GM12878 (cell line): ENCODE measurements at regions of chr7 and their contacts with region 1.

Region 1: GRCh38 chr7:100369105-100369504 is 4.2 kb upstream of the PILRA start:
- DNase-seq: peak; percentile 90
- ATAC-seq: peak; percentile 74
- H3K4me3 ChIP-seq: no peak overlapping the region
- H3K27ac ChIP-seq: peak overlapping the region; percentile 93
- H3K4me1 ChIP-seq: peaks cover 70% of the 10 kb centered on the region
- H3K27me3 ChIP-seq: no peaks in the 10 kb centered on the region
- CTCF ChIP-seq: no peak
- EP300 ChIP-seq: peak; percentile 81 to 87
- POLR2A ChIP-seq: peak; percentile 77
- RAD21 ChIP-seq: no peak

Region 2: GRCh38 chr7:100342765-100343164 is 26.3 kb before region 1 on chr7:
- CTCF ChIA-PET with region 1: interaction called, 13 read pairs
- POLR2A ChIA-PET with region 1: interaction called, 6 read pairs
- RAD21 ChIA-PET with region 1: no interaction called
- SMC1A ChIA-PET with region 1: interaction called, 7 read pairs
- in situ Hi-C with region 1: no loop called
- intact Hi-C with region 1: no loop called
- DNase-seq: no peak
- ATAC-seq: no peak
- H3K4me3 ChIP-seq: no peak overlapping the region
- H3K27ac ChIP-seq: no peak overlapping the region
- H3K4me1 ChIP-seq: peaks cover 15% of the 10 kb centered on the region
- H3K27me3 ChIP-seq: no peaks in the 10 kb centered on the region
- CTCF ChIP-seq: no peak
- EP300 ChIP-seq: no peak
- POLR2A ChIP-seq: no peak
- RAD21 ChIP-seq: no peak

Region 3: GRCh38 chr7:100390286-100391009 is 21.3 kb after region 1 on chr7:
- CTCF ChIA-PET with region 1: interaction called, 8 read pairs
- POLR2A ChIA-PET with region 1: interaction called, 30 read pairs
- RAD21 ChIA-PET with region 1: interaction called, 27 read pairs
- SMC1A ChIA-PET with region 1: interaction called, 27 read pairs
- in situ Hi-C with region 1: no loop called
- intact Hi-C with region 1: no loop called
- DNase-seq: no peak
- ATAC-seq: no peak
- H3K4me3 ChIP-seq: no peak overlapping the region
- H3K27ac ChIP-seq: no peak overlapping the region
- H3K4me1 ChIP-seq: peaks cover 16% of the 10 kb centered on the region
- H3K27me3 ChIP-seq: no peaks in the 10 kb centered on the region
- CTCF ChIP-seq: no peak
- EP300 ChIP-seq: no peak
- POLR2A ChIP-seq: no peak
- RAD21 ChIP-seq: no peak

Region 4: GRCh38 chr7:100418930-100419659 is 50.0 kb after region 1 on chr7:
- CTCF ChIA-PET with region 1: interaction called, 7 read pairs
- POLR2A ChIA-PET with region 1: interaction called, 4 read pairs
- RAD21 ChIA-PET with region 1: interaction called, 10 read pairs
- SMC1A ChIA-PET with region 1: interaction called, 10 read pairs
- in situ Hi-C with region 1: no loop called
- intact Hi-C with region 1: no loop called
- DNase-seq: no peak
- ATAC-seq: peak; percentile 80
- H3K4me3 ChIP-seq: no peak overlapping the region
- H3K27ac ChIP-seq: peak overlapping the region; percentile 35; the same call in 1 of the 2 replicates
- H3K4me1 ChIP-seq: peaks cover 16% of the 10 kb centered on the region
- H3K27me3 ChIP-seq: no peaks in the 10 kb centered on the region
- CTCF ChIP-seq: peak in 2 of 3 experiments; percentile 2 to 18; a peak in 1 of 6 replicates
- EP300 ChIP-seq: no peak
- POLR2A ChIP-seq: no peak
- RAD21 ChIP-seq: no peak

Region 5: GRCh38 chr7:100444311-100445278 is 75.5 kb after region 1 on chr7:
- CTCF ChIA-PET with region 1: interaction called, 12 read pairs
- POLR2A ChIA-PET with region 1: interaction called, 9 read pairs
- RAD21 ChIA-PET with region 1: interaction called, 11 read pairs
- SMC1A ChIA-PET with region 1: interaction called, 8 read pairs
- in situ Hi-C with region 1: no loop called
- intact Hi-C with region 1: no loop called
- DNase-seq: no peak
- ATAC-seq: peak; percentile 70
- H3K4me3 ChIP-seq: no peak overlapping the region
- H3K27ac ChIP-seq: peak overlapping the region; percentile 3; the same call in 1 of the 2 replicates
- H3K4me1 ChIP-seq: peaks cover 14% of the 10 kb centered on the region
- H3K27me3 ChIP-seq: no peaks in the 10 kb centered on the region
- CTCF ChIP-seq: no peak
- EP300 ChIP-seq: no peak
- POLR2A ChIP-seq: no peak
- RAD21 ChIP-seq: no peak

Region 6: DNA sequence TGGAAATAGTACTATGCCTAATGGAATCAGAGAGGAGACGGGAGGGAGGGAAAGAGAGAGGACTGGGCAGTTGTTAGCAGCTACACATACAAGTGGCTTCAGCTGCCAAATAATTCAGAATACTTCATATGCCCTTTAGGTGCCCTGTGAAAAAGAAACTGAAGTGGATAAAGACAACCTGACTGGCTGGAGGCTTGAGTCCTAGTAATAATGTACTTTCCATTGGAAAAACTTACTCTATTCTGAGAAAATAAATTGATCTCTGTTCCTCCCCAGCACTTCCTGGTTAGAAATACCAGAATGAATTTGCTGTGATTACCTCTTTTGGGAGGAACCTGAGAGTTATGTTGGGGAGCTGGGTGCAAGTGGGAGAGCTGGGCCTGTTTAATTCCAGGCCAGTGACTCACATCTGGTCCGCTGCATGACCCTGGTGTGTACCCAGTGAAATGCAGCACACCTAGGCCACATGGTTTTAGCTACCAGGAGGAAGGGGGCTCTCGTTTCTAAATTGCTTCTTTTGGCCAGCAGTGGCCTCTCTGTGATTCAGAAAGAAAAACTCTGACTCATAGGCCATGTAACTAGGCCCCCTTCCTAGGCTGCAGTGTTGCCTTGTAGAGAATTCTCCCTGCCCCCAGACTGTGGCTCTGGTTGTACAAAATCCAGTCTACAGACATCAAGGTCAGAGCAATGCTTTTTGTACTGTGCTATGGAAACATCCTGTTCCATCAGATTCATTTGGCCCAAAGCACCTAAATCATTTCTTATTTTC is 176.4 kb after region 1 on chr7:
- CTCF ChIA-PET with region 1: interaction called, 3 read pairs
- POLR2A ChIA-PET with region 1: no interaction called
- RAD21 ChIA-PET with region 1: interaction called, 6 read pairs
- SMC1A ChIA-PET with region 1: interaction called, 3 read pairs
- in situ Hi-C with region 1: no loop called
- intact Hi-C with region 1: loop called (anchors 10 kb)
- DNase-seq: peak; percentile 83
- ATAC-seq: peak; percentile 76
- H3K4me3 ChIP-seq: peak overlapping the region; percentile 56
- H3K27ac ChIP-seq: peak overlapping the region; percentile 99
- H3K4me1 ChIP-seq: peaks cover 75% of the 10 kb centered on the region
- H3K27me3 ChIP-seq: no peaks in the 10 kb centered on the region
- CTCF ChIP-seq: peak; percentile 9 to 26 (median 18); a peak in 2 of 6 replicates
- EP300 ChIP-seq: peak in 1 of 2 experiments; percentile 75; a peak in 3 of 4 replicates
- POLR2A ChIP-seq: peak; percentile 63
- RAD21 ChIP-seq: peak; percentile 40; the same call in 1 of the 2 replicates

Region 7: GRCh38 chr7:100578338-100579183 is 209.5 kb after region 1 on chr7:
- CTCF ChIA-PET with region 1: no interaction called
- POLR2A ChIA-PET with region 1: no interaction called
- RAD21 ChIA-PET with region 1: no interaction called
- SMC1A ChIA-PET with region 1: no interaction called
- in situ Hi-C with region 1: no loop called
- intact Hi-C with region 1: no loop called
- DNase-seq: no peak
- ATAC-seq: no peak
- H3K4me3 ChIP-seq: no peak overlapping the region
- H3K27ac ChIP-seq: no peak overlapping the region
- H3K4me1 ChIP-seq: peaks cover 10% of the 10 kb centered on the region
- H3K27me3 ChIP-seq: no peaks in the 10 kb centered on the region
- CTCF ChIP-seq: no peak
- EP300 ChIP-seq: no peak
- POLR2A ChIP-seq: no peak; the same call in 1 of the 2 replicates
- RAD21 ChIP-seq: no peak

Region 8: DNA sequence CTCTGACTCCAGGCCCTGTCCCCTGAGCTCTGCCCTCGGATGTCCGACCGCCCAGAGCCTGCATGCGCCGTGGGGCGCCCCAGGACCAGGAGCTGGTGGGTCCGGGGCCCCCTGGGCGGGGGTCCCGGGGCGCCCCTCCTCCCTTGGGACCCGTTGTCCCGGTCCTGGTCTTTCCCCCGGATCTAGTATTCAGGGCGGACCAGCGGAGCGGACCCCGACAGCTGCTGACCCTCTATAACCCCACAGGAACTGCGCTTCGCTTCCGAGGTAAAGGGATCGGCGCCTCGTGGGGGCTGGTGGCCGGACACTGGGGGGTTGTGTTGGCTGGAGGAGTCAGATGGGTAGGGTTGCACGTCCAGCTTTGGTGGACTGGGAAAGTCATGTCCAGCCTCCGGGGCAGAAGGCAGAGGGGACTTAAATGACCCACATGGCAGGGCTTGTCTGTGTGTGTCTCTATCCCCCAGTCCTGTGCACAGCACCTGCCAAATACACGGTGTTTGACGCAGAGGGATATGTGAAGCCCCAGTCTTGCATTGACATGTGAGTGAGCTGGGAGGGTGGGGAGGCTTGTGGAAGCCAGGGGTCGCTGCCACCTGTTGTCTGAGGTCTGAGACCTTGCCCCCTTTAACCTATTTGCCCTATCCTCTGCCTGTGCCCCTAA is 243.8 kb after region 1 on chr7:
- CTCF ChIA-PET with region 1: no interaction called
- POLR2A ChIA-PET with region 1: no interaction called
- RAD21 ChIA-PET with region 1: no interaction called
- SMC1A ChIA-PET with region 1: no interaction called
- in situ Hi-C with region 1: no loop called
- intact Hi-C with region 1: no loop called
- DNase-seq: no peak
- ATAC-seq: peak; percentile 9; the same call in 2 of the 3 replicates
- H3K4me3 ChIP-seq: peak overlapping the region; percentile 75
- H3K27ac ChIP-seq: peak overlapping the region; percentile 97; the same call in 1 of the 2 replicates
- H3K4me1 ChIP-seq: peaks cover 5% of the 10 kb centered on the region
- H3K27me3 ChIP-seq: peaks cover 0 to 3% of the 10 kb centered on the region in 2 experiments; a peak in 2 of 4 replicates
- CTCF ChIP-seq: 0 out of 6 replicates have a peak, but pooled peaks of 2 of the 3 experiments have one; percentile 2 to 5
- EP300 ChIP-seq: no peak
- POLR2A ChIP-seq: no peak
- RAD21 ChIP-seq: 0 out of 2 replicates have a peak, but pooled peaks have one; percentile 6

Region 9: DNA sequence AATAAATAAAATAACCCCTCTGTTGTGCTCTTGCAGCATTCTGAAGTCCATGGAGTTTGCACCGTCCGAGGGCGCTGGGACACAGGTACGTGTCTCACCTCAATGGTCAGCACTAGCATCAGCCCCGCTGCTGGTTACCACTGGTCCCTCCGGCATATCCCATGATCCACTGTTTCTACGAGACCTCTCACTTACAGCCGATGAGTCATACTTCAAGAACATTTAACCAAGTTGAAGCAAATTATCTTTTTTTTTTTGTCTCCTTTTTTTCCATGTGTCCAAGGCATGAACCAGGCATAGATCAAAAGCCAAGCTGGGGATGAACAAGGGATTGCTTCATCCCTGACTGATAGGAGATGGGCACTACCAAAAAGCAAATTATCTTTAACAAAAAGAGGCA is 1824.7 kb after region 1 on chr7:
- CTCF ChIA-PET with region 1: no interaction called
- POLR2A ChIA-PET with region 1: no interaction called
- RAD21 ChIA-PET with region 1: no interaction called
- SMC1A ChIA-PET with region 1: no interaction called
- in situ Hi-C with region 1: no loop called
- intact Hi-C with region 1: no loop called
- DNase-seq: no peak
- ATAC-seq: no peak
- H3K4me3 ChIP-seq: no peak overlapping the region
- H3K27ac ChIP-seq: no peak overlapping the region
- H3K4me1 ChIP-seq: no peaks in the 10 kb centered on the region
- H3K27me3 ChIP-seq: no peaks in the 10 kb centered on the region
- CTCF ChIP-seq: no peak
- EP300 ChIP-seq: no peak
- POLR2A ChIP-seq: no peak
- RAD21 ChIP-seq: no peak